Activated naive CD4-positive, alpha-beta T cell treated with anti-CD3 and anti-CD28 coated beads, Interleukin-2, amount 10 ng/mL, durations not matched to agents 7 days and 5 days (primary cell): ENCODE measurements at regions of chr3 and their contacts with region 1.

Region 1: DNA sequence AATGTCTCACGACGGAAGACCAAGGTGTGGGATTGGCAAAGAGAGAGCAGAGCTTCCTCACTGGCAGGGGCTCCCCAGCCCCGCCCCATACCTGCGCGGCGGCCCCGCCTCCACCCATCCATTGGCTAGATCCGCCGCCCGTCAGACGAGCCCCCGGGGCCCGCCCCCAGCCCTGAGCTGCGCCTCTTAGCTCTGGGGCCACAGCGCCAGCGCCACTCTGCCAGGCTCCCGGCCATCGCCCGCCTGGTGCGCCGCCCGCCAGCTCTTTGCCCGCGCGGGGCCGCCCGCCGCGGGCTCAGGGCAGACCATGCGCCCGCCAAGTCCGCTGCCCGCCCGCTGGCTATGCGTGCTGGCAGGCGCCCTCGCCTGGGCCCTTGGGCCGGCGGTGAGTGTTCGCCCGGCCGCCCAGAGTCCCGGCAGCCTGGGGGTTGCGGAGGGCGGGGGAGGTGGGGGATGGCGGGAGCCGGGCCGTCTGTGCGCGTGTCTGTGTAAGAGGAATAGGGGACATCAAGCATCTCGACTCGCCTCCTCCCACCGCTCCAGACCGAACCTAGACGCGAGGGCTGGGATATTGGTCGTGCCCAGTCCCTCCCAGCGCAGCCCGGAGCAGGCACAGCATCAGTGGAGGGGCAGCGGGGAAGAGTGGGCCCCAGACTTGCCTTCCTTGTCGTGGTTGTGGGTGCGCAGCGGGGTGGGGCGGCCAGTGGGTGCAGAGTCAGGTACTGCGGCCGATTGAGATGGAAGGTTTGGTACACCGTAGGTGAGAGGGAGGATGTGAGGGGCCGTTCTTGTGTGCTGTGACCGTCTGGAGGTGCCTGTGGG is at the start of gene VIPR1:
- DNase-seq: peak; percentile 95
- H3K4me3 Mint-ChIP-seq: peak within 1 kb of the TSS; percentile 85
- H3K27ac Mint-ChIP-seq: peak within 1 kb of the TSS; percentile 81
- H3K4me1 Mint-ChIP-seq: peaks cover 51% of the 10 kb centered on the region
- H3K27me3 Mint-ChIP-seq: peaks cover 50% of the 10 kb centered on the region

Region 2: GRCh38 chr3:42430781-42431532 is 71.7 kb before region 1 on chr3:
- CTCF ChIA-PET with region 1: no interaction called
- DNase-seq: no peak
- H3K4me3 Mint-ChIP-seq: no peak overlapping the region
- H3K27ac Mint-ChIP-seq: no peak overlapping the region
- H3K4me1 Mint-ChIP-seq: no peaks in the 10 kb centered on the region
- H3K27me3 Mint-ChIP-seq: peaks cover 23% of the 10 kb centered on the region

Region 3: DNA sequence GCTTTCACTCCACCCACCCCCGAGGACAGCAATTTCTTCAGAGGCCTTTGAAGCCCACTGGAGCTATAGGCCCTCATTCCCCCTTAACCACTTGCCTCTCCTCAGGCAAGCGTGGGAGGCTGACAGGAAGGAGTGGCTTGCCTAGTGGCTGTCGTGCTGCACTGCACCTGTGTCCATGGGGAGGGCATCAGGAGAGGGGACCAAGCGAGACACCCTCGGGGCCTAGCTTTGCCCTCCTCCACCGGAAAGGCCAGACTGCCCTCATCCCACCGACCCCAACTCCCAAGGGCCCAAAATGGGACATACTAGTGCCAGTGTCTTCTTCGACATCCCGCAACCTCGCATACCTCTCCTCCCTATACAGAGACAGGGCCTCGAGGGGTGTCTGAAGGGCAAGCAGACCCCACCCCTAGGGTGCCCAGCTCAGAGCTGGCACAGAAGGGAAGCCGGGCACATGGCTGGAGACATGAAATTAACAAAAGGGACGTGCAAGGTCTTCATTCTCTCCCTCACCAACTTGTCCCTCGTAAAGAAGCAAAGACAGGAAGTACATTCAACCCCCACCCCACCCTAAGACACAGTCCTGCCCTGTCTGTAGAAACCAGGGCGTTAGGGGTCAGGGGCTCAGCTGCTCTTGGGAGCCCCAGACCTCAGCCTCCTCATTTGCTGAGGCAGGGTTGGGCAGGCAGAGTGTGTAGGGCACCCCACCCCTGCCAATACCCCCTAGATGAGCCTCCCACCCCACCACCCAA is 24.2 kb after region 1 on chr3:
- CTCF ChIA-PET with region 1: interaction called, 14 read pairs
- DNase-seq: peak; percentile 66
- H3K4me3 Mint-ChIP-seq: no peak overlapping the region
- H3K27ac Mint-ChIP-seq: peak overlapping the region; percentile 90
- H3K4me1 Mint-ChIP-seq: peaks cover 73% of the 10 kb centered on the region
- H3K27me3 Mint-ChIP-seq: no peaks in the 10 kb centered on the region

Region 4: GRCh38 chr3:42539869-42540714 is 37.5 kb after region 1 on chr3:
- CTCF ChIA-PET with region 1: interaction called, 113 read pairs
- DNase-seq: peak; percentile 80
- H3K4me3 Mint-ChIP-seq: no peak overlapping the region
- H3K27ac Mint-ChIP-seq: no peak overlapping the region
- H3K4me1 Mint-ChIP-seq: peaks cover 21% of the 10 kb centered on the region
- H3K27me3 Mint-ChIP-seq: peaks cover 15% of the 10 kb centered on the region

Region 5: GRCh38 chr3:42547401-42547945 is 44.8 kb after region 1 on chr3:
- CTCF ChIA-PET with region 1: interaction called, 113 read pairs
- DNase-seq: peak; percentile 73
- H3K4me3 Mint-ChIP-seq: no peak overlapping the region
- H3K27ac Mint-ChIP-seq: peak overlapping the region; percentile 16
- H3K4me1 Mint-ChIP-seq: peaks cover 3% of the 10 kb centered on the region
- H3K27me3 Mint-ChIP-seq: no peaks in the 10 kb centered on the region

Region 6: DNA sequence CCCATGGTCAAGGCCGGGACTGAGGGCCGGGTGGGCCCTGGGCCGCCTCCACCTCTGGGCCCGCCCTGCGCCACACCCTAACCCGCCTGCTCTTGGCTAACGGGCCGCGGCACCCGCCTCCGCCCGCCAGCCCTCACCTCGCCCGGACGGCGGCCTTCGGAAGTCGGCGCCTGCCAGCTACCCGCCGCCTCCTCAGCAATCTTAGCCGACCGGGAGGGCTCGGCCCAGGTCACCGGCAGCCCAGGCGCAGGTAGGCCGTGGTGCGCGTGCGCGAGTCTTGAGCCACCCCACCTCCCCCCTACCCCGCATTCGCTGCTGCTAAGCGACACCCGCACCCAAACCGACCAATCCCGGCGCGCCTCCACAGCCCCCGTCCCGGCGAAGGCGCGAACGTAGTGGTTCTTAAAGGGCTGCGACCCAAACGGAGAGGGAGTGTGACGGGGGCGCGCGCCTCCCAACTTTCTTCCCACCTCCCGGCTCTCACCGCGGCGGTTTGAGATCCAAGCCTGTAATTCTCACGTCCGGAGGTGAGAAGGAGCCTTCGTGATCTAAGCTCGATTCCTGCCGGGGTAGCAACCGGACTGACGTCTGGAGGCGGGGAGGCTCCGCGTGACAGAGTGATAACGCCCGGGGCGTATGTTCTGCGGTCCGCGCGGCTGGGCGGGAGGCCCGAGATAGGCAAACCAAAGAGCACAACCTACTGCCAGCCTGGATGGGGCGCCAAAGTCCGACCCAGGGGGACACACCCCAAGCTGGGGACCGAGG is 79.3 kb after region 1 on chr3 and contains the start of gene SEC22C:
- CTCF ChIA-PET with region 1: no interaction called
- DNase-seq: peak; percentile 97
- H3K4me3 Mint-ChIP-seq: peak within 1 kb of the TSS; percentile 83
- H3K27ac Mint-ChIP-seq: peak within 1 kb of the TSS; percentile 96
- H3K4me1 Mint-ChIP-seq: peaks cover 60% of the 10 kb centered on the region
- H3K27me3 Mint-ChIP-seq: no peaks in the 10 kb centered on the region